Left colon (tissue), 2 donors: ENCODE measurements at regions of chr2 and their contacts with region 1.

Region 1: DNA sequence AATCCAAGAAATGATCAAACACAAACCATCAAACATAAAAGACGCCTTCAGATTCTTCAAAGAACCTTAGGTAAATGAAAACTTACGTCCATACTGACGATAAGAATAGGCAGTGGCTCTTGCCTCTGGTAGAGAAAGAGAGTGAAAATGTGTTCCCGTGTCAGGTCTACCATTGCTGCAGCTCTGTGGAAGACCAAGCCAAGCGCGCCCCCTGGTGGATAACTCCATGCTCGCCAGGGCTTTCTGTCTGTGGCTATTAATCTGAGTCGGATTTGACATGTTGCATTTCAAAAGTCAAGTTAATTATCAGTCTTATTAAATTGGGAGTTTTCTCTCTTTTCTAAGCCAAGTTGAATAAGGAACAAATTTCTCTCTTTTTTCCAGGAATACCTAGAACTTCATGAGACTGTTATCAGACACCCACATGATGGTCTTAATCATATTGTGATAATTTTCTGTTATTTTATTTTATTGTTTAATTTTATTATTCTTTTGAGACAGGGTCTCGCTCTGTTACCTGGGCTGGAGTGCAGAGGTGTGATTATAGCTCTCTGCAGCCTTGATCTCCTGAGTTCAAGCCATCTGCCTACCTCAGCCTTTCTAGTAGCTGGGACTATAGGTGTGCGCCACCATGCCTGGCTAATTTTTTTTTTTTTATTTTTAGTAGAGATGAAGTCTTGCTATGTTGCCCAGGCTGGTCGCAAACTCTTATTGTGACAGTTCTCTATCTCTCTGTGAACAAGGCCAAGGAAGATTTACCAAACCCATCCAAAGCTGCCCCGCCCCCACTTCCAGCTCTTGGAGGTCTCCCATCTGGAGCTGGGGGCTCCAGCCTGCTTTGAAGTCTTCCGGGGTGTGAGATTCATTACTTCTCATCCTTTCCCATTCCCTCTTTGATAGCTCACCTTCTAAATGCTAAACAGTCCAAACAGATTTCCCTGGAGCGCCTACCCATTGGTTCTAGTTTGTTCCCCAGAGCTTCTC is 15.8 kb upstream of the ZAP70 start:
- DNase-seq: peak; percentile 75 to 95
- ATAC-seq: peak; percentile 96

Region 2: DNA sequence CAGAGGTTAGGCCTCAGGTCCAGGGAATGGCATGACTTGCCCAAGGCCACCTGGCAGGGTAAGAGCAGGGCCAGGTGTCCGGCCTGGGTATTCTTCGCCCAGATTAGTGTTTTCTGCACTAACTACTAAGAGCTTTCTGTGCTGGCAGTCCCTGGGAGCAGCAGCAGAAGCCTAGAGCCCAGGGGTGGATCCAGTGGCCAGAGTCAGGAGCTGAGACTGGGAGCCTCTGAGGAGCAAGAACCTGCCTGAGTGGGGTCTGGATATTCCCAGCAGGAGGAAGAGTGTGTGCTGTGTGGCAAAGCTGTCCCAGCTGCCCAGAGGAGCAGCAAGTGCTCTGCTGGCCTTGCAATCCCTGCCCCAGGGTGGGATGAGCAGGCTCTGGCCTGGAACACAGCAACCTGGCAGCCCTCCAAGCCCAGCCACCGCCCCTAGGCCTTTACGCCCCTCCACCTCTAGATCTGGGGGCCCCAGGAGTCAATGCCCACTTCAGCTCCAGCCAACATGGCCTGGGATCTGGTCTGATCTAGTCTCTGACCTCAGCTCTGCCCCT is 1632.1 kb before region 1 on chr2:
- intact Hi-C with region 1: loop called in 1 of 2 experiments (anchors 10 kb)
- DNase-seq: no peak
- ATAC-seq: no peak

Region 3: DNA sequence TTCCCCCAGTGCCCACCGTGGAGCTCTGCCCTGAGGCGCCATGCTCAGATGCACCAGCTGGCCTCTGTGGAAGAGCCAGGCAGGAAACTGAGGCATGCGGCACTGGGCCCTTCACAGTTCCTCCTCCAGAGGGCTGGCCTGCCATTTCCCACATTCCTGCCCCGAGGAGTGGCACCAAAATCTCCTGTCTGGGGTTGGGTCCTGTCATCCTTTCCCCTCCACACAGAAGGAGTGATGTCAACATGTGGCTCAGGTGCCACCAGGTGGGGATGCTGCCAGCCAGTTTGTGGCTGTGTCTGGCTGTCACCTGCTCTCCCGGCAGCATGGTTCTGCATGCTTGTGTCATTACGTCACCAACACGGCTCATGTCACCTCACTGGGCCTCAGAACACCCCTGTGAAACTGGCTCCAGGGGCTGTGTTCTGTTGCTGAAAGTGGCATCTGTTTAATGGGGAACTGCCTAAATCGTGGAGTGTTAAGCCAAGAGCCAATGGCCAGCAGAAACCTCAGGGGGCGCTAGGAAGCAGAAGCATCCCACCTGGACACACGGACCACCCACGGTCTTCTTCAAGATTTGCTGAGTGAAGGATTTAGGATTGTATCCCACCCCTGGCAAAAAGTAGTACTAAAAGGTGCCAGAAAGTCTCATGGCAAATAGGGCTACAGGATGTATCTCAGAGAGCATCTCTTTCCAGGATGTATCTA is 67.2 kb after region 1 on chr2:
- intact Hi-C with region 1: no loop called
- DNase-seq: no peak
- ATAC-seq: no peak

Region 4: GRCh38 chr2:97844311-97844859 is 146.8 kb after region 1 on chr2:
- intact Hi-C with region 1: no loop called
- DNase-seq: no peak
- ATAC-seq: peak; percentile 91

Region 5: DNA sequence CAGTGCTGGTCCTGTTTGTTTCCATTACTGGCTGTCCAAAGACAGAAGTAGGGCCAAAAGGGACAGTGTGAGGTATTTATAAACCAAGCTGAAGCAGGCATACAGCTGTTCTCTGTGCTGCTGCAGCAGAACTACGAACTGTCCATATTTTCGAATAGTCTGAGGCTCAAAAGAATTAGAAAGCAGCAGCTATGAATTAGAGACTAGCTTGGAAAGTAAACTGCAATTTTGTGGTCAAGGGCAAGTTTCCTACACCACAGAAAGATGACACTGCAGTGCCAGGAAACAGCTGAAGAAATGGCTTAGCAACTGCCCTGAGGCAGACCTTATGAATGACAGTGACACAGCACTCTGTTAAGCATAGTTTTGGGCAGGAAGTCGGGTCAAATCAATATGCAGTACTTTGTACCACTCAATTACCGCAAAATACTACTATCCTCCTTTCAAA is 172.9 kb after region 1 on chr2:
- intact Hi-C with region 1: no loop called
- DNase-seq: no peak
- ATAC-seq: peak; percentile 35

Region 6: GRCh38 chr2:98063291-98063854 is 365.8 kb after region 1 on chr2:
- intact Hi-C with region 1: no loop called
- DNase-seq: no peak
- ATAC-seq: no peak

Region 7: DNA sequence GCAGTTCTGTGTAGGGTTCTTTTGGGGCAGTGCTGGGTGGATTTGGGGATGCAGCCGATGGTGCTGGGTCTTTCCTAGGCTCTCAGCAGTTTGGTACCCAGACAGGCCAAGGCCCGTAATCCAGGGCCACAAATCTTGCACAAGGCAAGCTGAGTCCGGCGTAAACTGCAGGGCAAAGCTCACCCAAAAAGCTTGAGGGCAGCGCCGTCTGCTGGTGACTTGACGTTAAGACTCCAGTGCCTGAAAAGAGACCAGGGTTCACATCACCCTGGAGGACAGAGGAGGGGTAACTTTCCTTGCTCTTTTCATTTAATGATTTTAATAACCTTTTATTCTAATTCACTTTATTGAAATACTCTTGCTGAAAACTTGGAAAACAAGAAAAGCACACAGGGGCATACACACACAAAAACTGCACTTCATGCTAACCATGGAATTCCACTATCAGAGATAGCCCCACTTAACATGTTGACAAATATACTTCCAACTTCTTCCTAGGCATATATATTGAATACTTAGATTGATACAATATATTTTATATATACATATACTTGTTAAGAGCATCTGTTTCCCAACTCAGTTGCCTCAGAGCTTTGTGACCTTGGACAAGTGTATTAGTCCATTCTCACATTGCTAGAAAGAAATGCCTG is 687.6 kb after region 1 on chr2:
- intact Hi-C with region 1: loop called in 1 of 2 experiments (anchors 5 kb)
- DNase-seq: peak; percentile 64 to 84
- ATAC-seq: peak; percentile 96